BJ (cell line): ENCODE measurements at regions of chr19 and their contacts with region 1.

Region 1: DNA sequence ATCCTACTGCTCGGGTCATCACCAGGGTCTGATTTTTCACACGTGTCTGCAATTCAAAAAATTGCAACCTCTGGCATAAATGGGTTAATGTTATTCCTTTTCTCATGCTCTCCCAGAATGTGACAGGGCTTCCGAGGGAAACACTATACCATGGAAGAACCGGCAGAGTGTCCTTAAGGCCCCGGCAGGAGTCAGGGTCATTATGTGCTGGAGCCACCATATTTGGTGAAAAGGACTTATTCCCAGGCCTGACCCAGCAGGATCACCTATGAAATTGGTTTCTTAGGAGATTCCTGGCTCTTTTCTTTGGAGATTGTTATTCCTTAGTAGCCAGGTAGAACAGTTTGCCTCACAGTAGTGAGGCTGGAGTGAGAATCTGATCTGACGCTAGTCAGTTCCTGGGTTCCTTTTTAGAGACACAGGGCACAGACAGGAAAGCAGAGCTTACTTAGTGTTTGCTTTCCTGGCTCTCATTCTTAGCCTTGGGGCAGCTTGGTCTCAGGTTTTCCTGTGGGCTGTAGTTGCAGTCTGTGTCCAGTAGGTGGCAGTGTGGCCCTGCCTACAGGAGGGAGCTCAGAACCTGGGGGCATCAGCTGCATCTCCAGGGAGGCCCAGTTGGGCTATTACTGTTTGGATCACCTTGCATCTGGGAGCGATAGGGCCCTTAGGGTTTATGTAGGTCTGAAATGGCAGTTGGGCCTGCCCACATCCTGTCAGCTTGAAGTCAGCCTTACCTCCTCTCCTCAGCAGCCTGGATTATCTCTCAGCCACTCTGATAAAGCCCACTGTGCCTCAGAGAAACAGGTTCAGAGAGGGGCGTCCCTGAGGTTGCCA is 12.4 kb downstream of the SNRNP70 start:
- DNase-seq: no peak
- H3K4me3 ChIP-seq: no peak overlapping the region
- H3K27me3 ChIP-seq: no peaks in the 10 kb centered on the region
- CTCF ChIP-seq: peak; percentile 99

Region 2: DNA sequence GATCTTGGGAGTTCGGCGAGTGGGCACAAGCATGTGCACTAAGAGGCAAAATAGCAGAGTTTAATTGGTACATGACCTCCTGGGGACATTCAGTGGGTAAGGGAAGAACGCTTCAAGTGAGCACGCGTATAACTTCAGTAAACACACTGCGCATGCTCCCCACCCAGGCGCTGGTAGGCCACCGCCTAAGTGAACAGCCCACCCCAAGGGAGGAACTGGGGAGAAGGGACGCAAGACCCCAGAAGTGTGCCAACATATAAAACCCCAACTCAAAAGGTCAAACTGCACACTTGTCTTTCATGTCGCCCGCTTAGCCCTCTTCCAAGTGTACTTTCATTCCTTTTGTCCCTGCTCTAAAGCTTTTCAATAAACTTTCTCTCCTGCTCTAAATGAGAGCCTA is 414.3 kb before region 1 on chr19:
- CTCF ChIA-PET with region 1: no interaction called
- POLR2A ChIA-PET with region 1: no interaction called
- DNase-seq: no peak
- H3K4me3 ChIP-seq: no peak overlapping the region
- H3K27me3 ChIP-seq: no peaks in the 10 kb centered on the region; the same call in 1 of the 2 replicates
- CTCF ChIP-seq: no peak

Region 3: GRCh38 chr19:48965040-48965805 is 132.4 kb before region 1 on chr19 and contains the start of gene FTL:
- CTCF ChIA-PET with region 1: no interaction called
- POLR2A ChIA-PET with region 1: no interaction called
- DNase-seq: peak; percentile 75
- H3K4me3 ChIP-seq: peak within 1 kb of the TSS; percentile 78
- H3K27me3 ChIP-seq: no peaks in the 10 kb centered on the region
- CTCF ChIP-seq: no peak
- polyA plus RNA-seq, gene FTL: 2,664 and 3,340 TPM in 2 replicates

Region 4: GRCh38 chr19:49085020-49085867 is 12.4 kb before region 1 on chr19 and contains the start of gene SNRNP70:
- CTCF ChIA-PET with region 1: interaction called, 15 read pairs
- POLR2A ChIA-PET with region 1: no interaction called
- DNase-seq: peak; percentile 90
- H3K4me3 ChIP-seq: peak within 1 kb of the TSS; percentile 85
- H3K27me3 ChIP-seq: no peaks in the 10 kb centered on the region
- CTCF ChIP-seq: no peak
- polyA plus RNA-seq, gene SNRNP70: 125 and 268 TPM in 2 replicates

Region 5: DNA sequence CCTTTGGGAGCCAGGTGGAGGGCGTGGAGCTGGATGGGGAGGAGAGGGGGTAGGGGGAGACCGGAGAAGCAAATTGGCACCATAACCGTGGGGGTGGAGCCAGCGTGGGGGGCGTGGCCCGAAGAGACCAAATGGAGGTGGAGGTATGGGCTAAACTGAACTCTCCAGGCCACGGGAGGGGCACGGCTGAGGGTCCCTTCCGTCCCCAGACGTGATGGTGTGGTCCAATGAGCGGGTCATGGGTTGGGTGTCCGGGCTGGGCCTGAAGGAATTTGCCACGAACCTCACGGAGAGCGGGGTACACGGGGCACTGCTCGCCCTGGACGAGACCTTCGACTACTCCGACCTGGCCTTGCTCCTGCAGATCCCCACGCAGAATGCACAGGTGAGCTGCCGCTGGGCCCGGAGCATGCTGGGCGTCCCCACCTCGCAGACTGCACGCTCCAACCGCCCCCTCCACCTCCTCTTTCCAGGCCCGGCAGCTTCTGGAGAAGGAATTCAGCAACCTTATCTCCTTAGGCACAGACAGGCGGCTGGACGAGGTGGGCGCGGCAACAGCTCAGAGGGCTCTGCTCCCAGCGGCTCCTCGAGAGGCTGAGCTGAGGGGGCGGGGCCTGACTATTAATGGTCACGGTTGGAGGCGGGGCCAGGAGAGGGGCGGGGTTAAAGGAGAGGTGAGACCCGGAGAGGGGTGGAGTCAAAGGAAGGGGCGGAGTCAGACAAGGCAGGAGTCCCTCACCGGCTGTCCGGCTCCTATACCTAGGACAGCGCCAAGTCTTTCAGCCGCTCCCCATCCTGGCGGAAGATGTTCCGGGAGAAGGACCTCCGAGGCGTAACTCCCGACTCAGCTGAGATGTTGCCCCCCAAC is 51.3 kb after region 1 on chr19:
- CTCF ChIA-PET with region 1: interaction called, 33 read pairs
- POLR2A ChIA-PET with region 1: no interaction called
- DNase-seq: peak; percentile 45
- H3K4me3 ChIP-seq: peak overlapping the region; percentile 68
- H3K27me3 ChIP-seq: no peaks in the 10 kb centered on the region; the same call in 1 of the 2 replicates
- CTCF ChIP-seq: no peak

Region 6: DNA sequence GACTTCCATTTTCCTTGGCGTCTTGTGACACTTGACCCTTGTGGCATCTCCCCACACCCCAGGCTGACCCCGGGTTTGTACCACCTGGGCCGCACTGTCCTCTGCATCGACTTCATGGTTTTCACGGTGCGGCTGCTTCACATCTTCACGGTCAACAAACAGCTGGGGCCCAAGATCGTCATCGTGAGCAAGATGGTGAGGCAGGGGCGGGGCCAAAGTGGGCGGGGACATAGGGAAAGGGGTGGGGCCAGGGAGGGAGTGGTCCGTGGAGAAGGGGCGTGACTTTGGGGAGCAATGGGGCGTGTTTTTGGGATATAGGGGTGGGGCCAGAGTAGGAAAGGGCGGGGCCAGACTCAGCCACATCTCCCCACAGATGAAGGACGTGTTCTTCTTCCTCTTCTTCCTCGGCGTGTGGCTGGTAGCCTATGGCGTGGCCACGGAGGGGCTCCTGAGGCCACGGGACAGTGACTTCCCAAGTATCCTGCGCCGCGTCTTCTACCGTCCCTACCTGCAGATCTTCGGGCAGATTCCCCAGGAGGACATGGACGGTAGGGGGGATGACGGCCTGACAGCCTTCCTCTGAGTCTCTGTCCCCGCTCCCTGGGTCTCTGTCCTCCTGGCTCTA is 102.7 kb after region 1 on chr19:
- CTCF ChIA-PET with region 1: interaction called, 31 read pairs
- POLR2A ChIA-PET with region 1: no interaction called
- DNase-seq: no peak
- H3K4me3 ChIP-seq: no peak overlapping the region
- H3K27me3 ChIP-seq: no peaks in the 10 kb centered on the region
- CTCF ChIP-seq: no peak

Region 7: DNA sequence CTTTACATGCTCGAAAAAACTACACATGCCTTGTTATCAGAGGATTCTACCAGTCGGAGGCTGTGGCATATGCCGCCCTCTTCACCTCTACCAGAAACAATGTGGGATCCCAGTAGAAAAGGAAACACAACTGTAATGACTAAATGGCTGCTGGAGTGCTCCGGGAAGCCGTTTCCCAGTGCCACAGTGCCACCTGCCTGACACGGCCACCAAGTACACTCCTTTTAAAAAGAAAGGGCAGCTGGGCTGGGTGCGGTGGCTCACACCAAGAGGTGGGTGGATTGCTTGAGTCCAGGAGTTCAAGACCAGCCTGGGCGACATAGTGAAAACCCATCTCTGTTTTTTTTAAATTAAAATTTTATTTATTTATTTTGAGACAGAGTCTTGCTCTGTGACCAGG is 127.2 kb after region 1 on chr19:
- CTCF ChIA-PET with region 1: interaction called, 10 read pairs
- POLR2A ChIA-PET with region 1: no interaction called
- DNase-seq: no peak
- H3K4me3 ChIP-seq: no peak overlapping the region
- H3K27me3 ChIP-seq: no peaks in the 10 kb centered on the region
- CTCF ChIP-seq: peak; percentile 39

Region 8: GRCh38 chr19:49624967-49625910 is 527.6 kb after region 1 on chr19:
- CTCF ChIA-PET with region 1: no interaction called
- POLR2A ChIA-PET with region 1: no interaction called
- DNase-seq: no peak
- H3K4me3 ChIP-seq: no peak overlapping the region
- H3K27me3 ChIP-seq: no peaks in the 10 kb centered on the region
- CTCF ChIP-seq: no peak